Activated naive CD4-positive, alpha-beta T cell treated with anti-CD3 and anti-CD28 coated beads for 36 hours (primary cell): ENCODE measurements at regions of chr17 and their contacts with region 1.

Region 1: GRCh38 chr17:4939796-4940624 is at the starts of genes RNF167 and SLC25A11:
- DNase-seq: peak; percentile 98
- H3K4me3 Mint-ChIP-seq: peak within 1 kb of the TSS; percentile 94
- H3K27ac Mint-ChIP-seq: peak within 1 kb of the TSS; percentile 99
- H3K4me1 Mint-ChIP-seq: peaks cover 57% of the 10 kb centered on the region
- H3K27me3 Mint-ChIP-seq: no peaks in the 10 kb centered on the region
- total RNA-seq, gene RNF167: 133 to 140 TPM
- total RNA-seq, gene SLC25A11: 63.8 to 65.2 TPM

Region 2: DNA sequence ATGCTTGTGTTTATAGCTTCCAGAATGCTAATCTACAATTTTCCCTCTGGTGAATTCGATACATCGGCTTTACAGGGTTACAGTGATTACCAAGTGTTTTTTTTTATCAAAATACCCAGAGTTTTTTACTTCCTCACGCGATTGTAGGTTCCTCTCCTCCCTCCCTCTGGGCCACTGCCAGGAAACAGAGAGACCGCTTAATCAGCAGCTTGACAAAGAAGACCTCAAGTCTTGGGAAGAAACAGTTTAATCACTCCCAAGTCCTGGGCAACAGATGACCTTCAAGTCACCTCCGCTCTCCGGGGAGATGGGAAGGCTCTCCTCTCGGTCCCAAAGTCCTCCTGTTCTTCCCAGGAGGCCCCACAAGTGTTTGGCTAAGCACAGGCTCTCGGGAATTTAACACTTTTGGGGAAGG is 332.2 kb before region 1 on chr17:
- CTCF ChIA-PET with region 1: no interaction called
- intact Hi-C with region 1: no loop called
- DNase-seq: no peak
- H3K4me3 Mint-ChIP-seq: no peak overlapping the region
- H3K27ac Mint-ChIP-seq: no peak overlapping the region
- H3K4me1 Mint-ChIP-seq: no peaks in the 10 kb centered on the region
- H3K27me3 Mint-ChIP-seq: peaks cover 9% of the 10 kb centered on the region

Region 3: GRCh38 chr17:4733073-4733531 is 206.9 kb before region 1 on chr17:
- CTCF ChIA-PET with region 1: no interaction called
- intact Hi-C with region 1: loop called (anchors 2 kb)
- DNase-seq: peak; percentile 39
- H3K4me3 Mint-ChIP-seq: no peak overlapping the region
- H3K27ac Mint-ChIP-seq: no peak overlapping the region
- H3K4me1 Mint-ChIP-seq: peaks cover 32% of the 10 kb centered on the region
- H3K27me3 Mint-ChIP-seq: peaks cover 1% of the 10 kb centered on the region

Region 4: GRCh38 chr17:4903051-4903818 is 36.8 kb before region 1 on chr17 and contains the start of gene CHRNE:
- CTCF ChIA-PET with region 1: interaction called, 3 read pairs
- intact Hi-C with region 1: loop called (anchors 2 kb)
- DNase-seq: peak; percentile 91
- H3K4me3 Mint-ChIP-seq: peak within 1 kb of the TSS; percentile 1
- H3K27ac Mint-ChIP-seq: peak within 1 kb of the TSS; percentile 48
- H3K4me1 Mint-ChIP-seq: peaks cover 32% of the 10 kb centered on the region
- H3K27me3 Mint-ChIP-seq: no peaks in the 10 kb centered on the region
- total RNA-seq, gene CHRNE: 0.22 to 0.38 TPM

Region 5: DNA sequence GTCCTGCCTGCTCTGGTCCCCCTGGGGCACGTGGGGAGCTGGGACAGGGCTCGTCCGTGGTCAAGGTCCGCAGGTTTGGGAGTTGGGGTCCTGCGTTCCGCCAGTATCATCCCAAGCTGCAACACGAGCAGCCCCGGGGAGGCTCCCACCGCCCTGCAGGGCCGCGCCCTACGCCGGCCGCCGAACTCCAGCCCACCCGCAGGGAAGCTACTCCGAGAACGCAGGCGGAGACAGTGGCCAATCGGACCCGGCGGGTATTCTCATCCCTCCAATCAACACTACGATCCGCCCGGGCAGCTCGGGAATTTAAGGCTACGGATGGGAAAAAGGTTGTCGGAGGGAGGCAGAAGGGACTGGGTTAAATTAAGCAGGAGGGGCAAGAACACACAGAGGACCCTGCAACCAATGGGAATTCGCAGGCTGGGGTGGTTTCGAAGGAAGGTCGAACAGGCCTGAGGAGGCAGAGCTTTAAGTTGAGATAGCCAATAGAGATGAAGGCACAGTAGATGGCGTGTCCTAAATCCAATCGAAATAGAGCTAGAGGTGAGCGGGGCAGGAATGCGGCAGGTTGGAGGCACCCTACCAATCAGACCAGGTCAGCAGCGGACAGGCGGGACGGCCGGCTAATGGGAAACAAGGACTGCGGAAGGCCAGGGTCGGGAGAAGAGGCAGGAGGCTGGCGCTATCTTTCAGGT is 27.0 kb after region 1 on chr17:
- CTCF ChIA-PET with region 1: interaction called, 4 read pairs
- intact Hi-C with region 1: loop called (anchors 1 kb)
- DNase-seq: peak; percentile 97
- H3K4me3 Mint-ChIP-seq: no peak overlapping the region
- H3K27ac Mint-ChIP-seq: no peak overlapping the region
- H3K4me1 Mint-ChIP-seq: peaks cover 39% of the 10 kb centered on the region
- H3K27me3 Mint-ChIP-seq: no peaks in the 10 kb centered on the region

Region 6: DNA sequence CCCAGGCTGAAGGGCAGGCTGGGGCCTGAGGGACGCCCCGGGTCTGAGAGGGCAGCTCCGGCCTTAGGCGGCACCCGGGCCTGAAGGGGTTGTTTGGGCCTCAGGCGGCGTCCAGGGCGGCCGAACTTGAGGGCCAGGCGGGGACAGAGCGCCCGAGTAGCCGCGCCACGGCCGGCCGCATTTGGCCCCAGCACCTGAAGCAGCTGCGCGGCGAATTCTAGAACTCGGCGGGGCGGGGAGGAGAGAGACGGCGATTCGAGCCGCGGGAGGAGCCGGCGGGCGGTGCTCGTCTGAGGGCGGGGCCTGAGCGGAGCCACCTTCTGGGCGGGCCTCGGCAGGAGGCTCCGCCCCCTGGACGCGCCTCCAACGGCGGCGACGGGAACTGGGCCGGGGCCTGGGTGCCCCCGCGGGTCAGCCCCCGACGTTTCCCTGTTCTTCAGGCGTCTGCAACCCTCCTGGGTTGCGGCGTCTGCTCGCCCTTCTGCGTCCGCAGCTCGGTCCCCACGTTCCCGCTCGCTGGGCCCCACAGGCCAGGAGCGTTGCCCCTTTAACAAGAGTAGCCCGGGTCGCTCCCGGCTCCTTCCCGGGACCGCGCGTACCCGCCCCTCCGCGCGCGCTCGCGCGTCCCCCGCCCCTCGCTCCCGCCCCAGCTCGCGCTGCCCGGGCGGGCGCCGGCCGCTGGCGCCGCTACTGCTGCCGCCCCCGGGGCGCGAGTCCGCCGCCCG is 57.5 kb after region 1 on chr17 and contains the starts of genes INCA1 and KIF1C:
- CTCF ChIA-PET with region 1: no interaction called
- intact Hi-C with region 1: loop called (anchors 1 kb)
- DNase-seq: peak; percentile 93
- H3K4me3 Mint-ChIP-seq: peak within 1 kb of the TSS; percentile 83
- H3K27ac Mint-ChIP-seq: peak within 1 kb of the TSS; percentile 53
- H3K4me1 Mint-ChIP-seq: peaks cover 18% of the 10 kb centered on the region
- H3K27me3 Mint-ChIP-seq: no peaks in the 10 kb centered on the region
- total RNA-seq, gene INCA1: 0.21 to 0.54 TPM
- total RNA-seq, gene KIF1C: 30.5 to 31.1 TPM